Aorta (tissue), 5 donors: ENCODE measurements at regions of chr2 and their contacts with region 1.

Region 1: GRCh38 chr2:197102231-197102630 is 175.7 kb upstream of the PGAP1 start:
- DNase-seq: no peak
- ATAC-seq: no peak
- H3K4me3 ChIP-seq: no peak overlapping the region
- H3K27ac ChIP-seq: no peak overlapping the region
- H3K4me1 ChIP-seq: peaks cover 1 to 3% of the 10 kb centered on the region in 2 donors
- H3K27me3 ChIP-seq: no peaks in the 10 kb centered on the region

Region 2: GRCh38 chr2:197191177-197191939 is 89.1 kb after region 1 on chr2:
- intact Hi-C with region 1: loop called in 1 of 2 experiments (anchors 5 kb)
- DNase-seq: no peak
- ATAC-seq: no peak
- H3K4me3 ChIP-seq: no peak overlapping the region
- H3K27ac ChIP-seq: no peak overlapping the region
- H3K4me1 ChIP-seq: peaks cover 0 to 5% of the 10 kb centered on the region in 2 donors
- H3K27me3 ChIP-seq: no peaks in the 10 kb centered on the region